ENCODE measurements at regions of chr11 and their contacts with region 1.

Region 1: DNA sequence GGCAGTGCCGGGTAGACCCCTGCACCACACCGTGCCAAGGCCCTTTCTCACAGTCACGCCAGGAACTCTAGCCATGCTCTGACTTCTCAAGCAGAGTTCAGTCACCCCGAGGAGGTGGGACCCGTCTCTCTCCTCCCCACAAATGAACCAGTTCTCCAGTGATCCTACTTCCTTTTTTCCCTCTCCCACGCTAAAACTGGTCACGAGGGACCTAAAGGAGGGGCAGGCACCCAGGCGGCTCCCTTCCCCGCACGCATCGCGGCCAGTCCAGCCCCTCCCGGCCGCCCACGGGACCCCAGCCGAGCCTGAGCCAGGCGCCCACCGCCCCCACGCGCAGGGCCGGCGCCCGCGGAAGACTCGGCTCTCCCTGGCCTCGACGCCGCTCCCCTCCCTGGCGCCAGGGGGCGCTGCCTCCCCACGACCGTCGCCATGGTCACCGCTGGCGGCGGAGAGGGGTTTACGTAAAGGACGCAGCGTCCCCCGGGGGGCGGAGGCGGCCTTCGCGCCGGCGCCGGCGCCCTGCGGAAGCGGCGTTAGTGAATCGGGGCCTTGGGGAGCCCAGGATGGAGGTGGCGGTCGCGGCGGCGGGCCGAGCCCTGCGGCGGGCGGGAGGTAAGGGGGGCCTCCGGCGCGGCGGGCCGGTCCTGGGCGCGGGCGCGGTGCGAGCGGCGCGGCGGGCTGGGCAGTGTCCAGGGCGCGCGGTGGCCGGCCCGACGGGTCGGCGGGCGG is at the start of gene DAGLA:
- DNase-seq: no peak
- H3K4me3 ChIP-seq: peak within 1 kb of the TSS; percentile 47 to 61
- H3K27ac ChIP-seq: peak within 1 kb of the TSS; percentile 52
- H3K4me1 ChIP-seq: peaks cover 36% of the 10 kb centered on the region
- H3K27me3 ChIP-seq: no peaks in the 10 kb centered on the region
- CTCF ChIP-seq: peak; percentile 93 to 97 (median 94)
- POLR2A ChIP-seq: no peak
- total RNA-seq, gene DAGLA: 1.5 TPM

Region 2: DNA sequence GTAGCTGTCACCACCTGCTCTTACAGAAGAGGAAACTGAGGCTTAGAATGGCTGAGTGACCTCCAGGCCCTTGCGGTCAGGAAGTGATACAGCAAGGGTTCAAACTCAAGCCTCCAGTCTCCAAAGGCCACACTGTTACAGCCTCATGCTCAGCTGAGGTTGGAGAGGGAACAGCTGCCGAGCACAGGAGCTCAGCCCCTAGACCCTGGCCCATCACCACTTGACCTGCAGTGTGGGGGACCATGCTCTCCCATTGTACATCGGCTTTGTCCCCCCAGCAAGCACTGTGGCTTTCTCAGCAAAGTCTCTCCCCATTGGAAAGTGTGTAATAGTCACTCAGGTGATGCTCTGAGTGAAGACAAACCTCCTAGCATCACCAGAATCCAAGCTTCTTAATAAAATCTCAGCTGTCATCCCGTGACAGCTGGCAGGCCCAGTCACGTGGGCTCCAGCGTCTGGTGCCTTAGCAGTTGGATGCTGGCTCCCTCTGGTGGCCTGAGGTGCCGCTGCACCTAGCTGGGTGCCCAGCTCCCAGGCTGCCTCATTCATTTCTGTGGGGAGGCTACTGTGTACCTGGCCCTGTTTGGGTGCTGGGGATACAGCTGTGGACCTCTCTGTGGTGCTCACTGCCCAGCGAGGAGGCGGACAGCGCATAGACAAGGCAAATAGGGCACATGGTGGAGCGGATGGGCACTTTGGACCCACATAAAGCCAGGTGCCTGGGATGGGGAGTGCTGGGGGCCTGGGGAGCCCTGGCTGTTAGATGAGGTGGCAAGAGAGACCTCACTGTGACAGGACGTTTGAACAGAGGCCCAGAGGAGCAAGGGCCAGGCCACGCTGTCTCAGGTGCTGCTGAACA is 53.3 kb after region 1 on chr11:
- intact Hi-C with region 1: loop called (anchors 5 kb)
- DNase-seq: no peak
- H3K4me3 ChIP-seq: no peak overlapping the region
- H3K27ac ChIP-seq: peak overlapping the region; percentile 72
- H3K4me1 ChIP-seq: peaks cover 31% of the 10 kb centered on the region
- H3K27me3 ChIP-seq: no peaks in the 10 kb centered on the region
- CTCF ChIP-seq: peak; percentile 88 to 99 (median 99)
- POLR2A ChIP-seq: no peak